ENCODE measurements at regions of chr15 and their contacts with region 1.

Region 1: GRCh38 chr15:100918034-100918689 is 995 bp upstream of the LRRK1 start:
- DNase-seq: peak; percentile 62
- ATAC-seq: peak; percentile 83
- H3K4me3 ChIP-seq: peak overlapping the region; percentile 60
- H3K27ac ChIP-seq: no peak overlapping the region; the same call in 1 of the 2 replicates
- H3K4me1 ChIP-seq: no peaks in the 10 kb centered on the region; the same call in 1 of the 2 replicates
- H3K27me3 ChIP-seq: no peaks in the 10 kb centered on the region
- CTCF ChIP-seq: peak; percentile 90
- POLR2A ChIP-seq: no peak
- RAD21 ChIP-seq: peak; percentile 85

Region 2: DNA sequence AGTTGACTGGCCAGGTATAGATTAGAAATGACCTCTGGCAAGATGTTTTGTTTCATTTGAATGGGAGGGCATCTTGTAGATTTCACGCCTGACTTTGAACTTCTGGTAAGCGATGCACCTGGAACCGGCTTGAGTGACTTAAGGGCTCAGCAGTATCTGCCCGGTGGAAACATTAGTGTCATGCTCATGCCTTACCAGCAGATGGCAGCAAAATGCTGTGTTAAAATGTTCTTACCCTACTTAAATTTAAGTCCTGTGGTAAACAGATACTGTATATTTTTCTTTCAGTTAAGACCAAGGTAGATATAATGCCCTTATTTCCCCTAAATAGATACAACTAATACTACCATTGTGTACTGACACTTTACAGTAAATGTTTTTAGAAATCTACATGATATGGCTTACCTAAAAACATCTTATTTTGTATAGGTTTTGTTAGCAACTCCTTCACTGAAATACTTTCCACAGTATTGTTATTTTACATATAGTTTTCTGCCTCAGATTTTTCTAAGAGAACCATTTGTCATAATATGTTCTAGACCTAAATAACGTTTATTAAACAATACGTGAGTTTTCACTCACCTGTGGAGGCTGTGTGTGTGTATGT is 290.3 kb before region 1 on chr15:
- CTCF ChIA-PET with region 1: no interaction called
- POLR2A ChIA-PET with region 1: no interaction called
- dilution Hi-C with region 1: no loop called
- in situ Hi-C with region 1: no loop called
- intact Hi-C with region 1: loop called (anchors 1 kb)
- DNase-seq: peak; percentile 82
- ATAC-seq: peak; percentile 98
- H3K4me3 ChIP-seq: no peak overlapping the region
- H3K27ac ChIP-seq: no peak overlapping the region
- H3K4me1 ChIP-seq: no peaks in the 10 kb centered on the region
- H3K27me3 ChIP-seq: no peaks in the 10 kb centered on the region
- CTCF ChIP-seq: peak; percentile 86
- POLR2A ChIP-seq: 0 out of 2 replicates have a peak, but pooled peaks have one; percentile 23
- RAD21 ChIP-seq: peak; percentile 86

Region 3: GRCh38 chr15:100809151-100809550 is 109.0 kb before region 1 on chr15:
- CTCF ChIA-PET with region 1: no interaction called
- POLR2A ChIA-PET with region 1: no interaction called
- dilution Hi-C with region 1: no loop called
- in situ Hi-C with region 1: no loop called
- intact Hi-C with region 1: no loop called
- DNase-seq: no peak
- ATAC-seq: no peak
- H3K4me3 ChIP-seq: no peak overlapping the region
- H3K27ac ChIP-seq: no peak overlapping the region
- H3K4me1 ChIP-seq: no peaks in the 10 kb centered on the region
- H3K27me3 ChIP-seq: no peaks in the 10 kb centered on the region
- CTCF ChIP-seq: no peak
- POLR2A ChIP-seq: no peak
- RAD21 ChIP-seq: no peak

Measured in IMR-90 (cell line).